ACHN (cell line): ENCODE measurements at regions of chr16 and their contacts with region 1.

Region 1: GRCh38 chr16:3611146-3611975 is at the start of gene SLX4:
- DNase-seq: peak; percentile 96

Region 2: GRCh38 chr16:3509470-3509928 is 101.9 kb before region 1 on chr16:
- in situ Hi-C with region 1: loop called (anchors 25 kb)
- DNase-seq: no peak

Region 3: GRCh38 chr16:3530371-3530914 is 80.9 kb before region 1 on chr16:
- in situ Hi-C with region 1: no loop called
- DNase-seq: no peak